Activated CD4-positive, alpha-beta memory T cell treated with anti-CD3 and anti-CD28 coated beads, Interleukin-2, amount 10 ng/mL, durations not matched to agents 7 days and 5 days (primary cell): ENCODE measurements at regions of chr17 and their contacts with region 1.

Region 1: GRCh38 chr17:59707114-59707970 is at the starts of genes PTRH2 and VMP1:
- DNase-seq: peak; percentile 95
- H3K4me3 Mint-ChIP-seq: peak within 1 kb of the TSS; percentile 98
- H3K27ac Mint-ChIP-seq: peak within 1 kb of the TSS; percentile 91
- H3K4me1 Mint-ChIP-seq: peaks cover 50% of the 10 kb centered on the region
- H3K27me3 Mint-ChIP-seq: no peaks in the 10 kb centered on the region
- total RNA-seq, gene PTRH2: 22.8 to 23.3 TPM
- total RNA-seq, gene VMP1: 398 to 408 TPM

Region 2: GRCh38 chr17:59155439-59156182 is 551.7 kb before region 1 on chr17 and contains the start of gene PRR11:
- CTCF ChIA-PET with region 1: no interaction called
- POLR2A ChIA-PET with region 1: interaction called, 13 read pairs
- DNase-seq: peak; percentile 96
- H3K4me3 Mint-ChIP-seq: no peak within 1 kb of the TSS
- H3K27ac Mint-ChIP-seq: no peak within 1 kb of the TSS
- H3K4me1 Mint-ChIP-seq: peaks cover 63% of the 10 kb centered on the region
- H3K27me3 Mint-ChIP-seq: no peaks in the 10 kb centered on the region
- total RNA-seq, gene PRR11: 68.2 to 70.6 TPM

Region 3: GRCh38 chr17:59964482-59965328 is 257.4 kb after region 1 on chr17 and contains the start of gene RNFT1:
- CTCF ChIA-PET with region 1: no interaction called
- POLR2A ChIA-PET with region 1: interaction called, 12 read pairs
- DNase-seq: peak; percentile 91
- H3K4me3 Mint-ChIP-seq: peak within 1 kb of the TSS; percentile 77
- H3K27ac Mint-ChIP-seq: peak within 1 kb of the TSS; percentile 75
- H3K4me1 Mint-ChIP-seq: peaks cover 19% of the 10 kb centered on the region
- H3K27me3 Mint-ChIP-seq: peaks cover 2% of the 10 kb centered on the region
- total RNA-seq, gene RNFT1: 20.5 to 21.3 TPM